Activated CD4-positive, alpha-beta T cell treated with anti-CD3 and anti-CD28 coated beads for 36 hours (primary cell): ENCODE measurements at regions of chr6 and their contacts with region 1.

Region 1: GRCh38 chr6:42453031-42453653 is 1.4 kb upstream of the TRERF1 start:
- DNase-seq: peak; percentile 87
- ATAC-seq: peak; percentile 76
- H3K4me3 Mint-ChIP-seq: peak overlapping the region; percentile 83
- H3K27ac Mint-ChIP-seq: no peak overlapping the region
- H3K4me1 Mint-ChIP-seq: peaks cover 34% of the 10 kb centered on the region
- H3K27me3 Mint-ChIP-seq: peaks cover 5% of the 10 kb centered on the region

Region 2: GRCh38 chr6:42315991-42316378 is 137.2 kb before region 1 on chr6:
- CTCF ChIA-PET with region 1: no interaction called
- POLR2A ChIA-PET with region 1: no interaction called
- intact Hi-C with region 1: loop called in 1 of 2 experiments (anchors 5 kb)
- DNase-seq: peak; percentile 54
- ATAC-seq: peak; percentile 61
- H3K4me3 Mint-ChIP-seq: no peak overlapping the region
- H3K27ac Mint-ChIP-seq: peak overlapping the region; percentile 69
- H3K4me1 Mint-ChIP-seq: peaks cover 61% of the 10 kb centered on the region
- H3K27me3 Mint-ChIP-seq: no peaks in the 10 kb centered on the region

Region 3: DNA sequence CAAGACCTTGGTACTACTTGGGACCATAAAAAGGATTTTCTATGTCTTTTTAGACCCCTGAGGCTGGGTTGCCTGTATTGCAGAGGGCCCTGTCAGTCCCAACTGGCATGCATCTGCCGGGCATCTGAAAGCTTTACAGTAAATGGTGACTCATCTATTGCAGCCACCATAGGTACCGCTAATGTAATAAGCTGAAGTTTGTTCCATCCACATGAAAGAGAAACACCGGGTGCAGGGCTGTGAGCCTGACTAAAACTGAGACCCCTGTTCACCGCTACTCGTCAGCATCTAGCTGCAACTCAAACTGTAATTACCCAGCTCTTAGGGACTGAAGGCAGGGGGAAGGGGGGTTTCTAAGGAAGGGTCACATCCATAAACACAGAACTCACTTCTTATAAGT is 51.0 kb before region 1 on chr6:
- CTCF ChIA-PET with region 1: interaction called, 5 read pairs
- POLR2A ChIA-PET with region 1: no interaction called
- intact Hi-C with region 1: loop called in 1 of 2 experiments (anchors 2 kb)
- DNase-seq: peak; percentile 78
- ATAC-seq: peak; percentile 85
- H3K4me3 Mint-ChIP-seq: peak overlapping the region; percentile 18
- H3K27ac Mint-ChIP-seq: peak overlapping the region; percentile 69
- H3K4me1 Mint-ChIP-seq: peaks cover 83% of the 10 kb centered on the region
- H3K27me3 Mint-ChIP-seq: no peaks in the 10 kb centered on the region

Region 4: GRCh38 chr6:42423244-42423643 is 29.9 kb before region 1 on chr6:
- CTCF ChIA-PET with region 1: interaction called, 3 read pairs
- POLR2A ChIA-PET with region 1: no interaction called
- intact Hi-C with region 1: loop called (anchors 2 kb)
- DNase-seq: peak; percentile 69
- ATAC-seq: peak; percentile 75
- H3K4me3 Mint-ChIP-seq: peak overlapping the region; percentile 1
- H3K27ac Mint-ChIP-seq: peak overlapping the region; percentile 20
- H3K4me1 Mint-ChIP-seq: peaks cover 63% of the 10 kb centered on the region
- H3K27me3 Mint-ChIP-seq: no peaks in the 10 kb centered on the region

Region 5: DNA sequence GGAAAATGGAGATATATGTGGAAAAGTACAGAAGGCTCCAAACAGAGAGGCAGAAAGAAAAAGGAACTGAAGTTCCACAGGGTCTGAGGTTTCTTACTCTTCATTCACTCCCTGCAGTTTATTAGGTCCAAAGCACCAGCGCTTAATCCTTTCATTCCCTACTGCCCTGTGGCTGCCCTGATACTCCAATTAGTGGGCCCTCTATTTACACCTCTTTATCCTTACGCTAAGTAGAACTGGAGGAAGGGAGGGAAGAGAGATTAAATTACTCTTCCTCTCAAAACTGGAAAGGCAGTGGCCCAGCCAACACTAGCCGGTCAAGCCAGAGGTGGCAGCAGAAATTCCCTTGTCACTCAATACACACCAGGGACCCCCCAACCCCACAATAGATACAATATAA is 21.8 kb before region 1 on chr6:
- CTCF ChIA-PET with region 1: no interaction called
- POLR2A ChIA-PET with region 1: interaction called, 10 read pairs
- intact Hi-C with region 1: no loop called
- DNase-seq: no peak
- ATAC-seq: no peak
- H3K4me3 Mint-ChIP-seq: no peak overlapping the region
- H3K27ac Mint-ChIP-seq: no peak overlapping the region
- H3K4me1 Mint-ChIP-seq: peaks cover 43% of the 10 kb centered on the region
- H3K27me3 Mint-ChIP-seq: no peaks in the 10 kb centered on the region

Region 6: GRCh38 chr6:42520786-42521607 is 67.9 kb after region 1 on chr6:
- CTCF ChIA-PET with region 1: no interaction called
- POLR2A ChIA-PET with region 1: no interaction called
- intact Hi-C with region 1: loop called in 1 of 2 experiments (anchors 2 kb)
- DNase-seq: peak; percentile 49
- ATAC-seq: peak; percentile 97
- H3K4me3 Mint-ChIP-seq: no peak overlapping the region
- H3K27ac Mint-ChIP-seq: peak overlapping the region; percentile 76
- H3K4me1 Mint-ChIP-seq: peaks cover 24% of the 10 kb centered on the region
- H3K27me3 Mint-ChIP-seq: no peaks in the 10 kb centered on the region

Region 7: GRCh38 chr6:42532038-42532669 is 79.0 kb after region 1 on chr6:
- CTCF ChIA-PET with region 1: interaction called, 5 read pairs
- POLR2A ChIA-PET with region 1: interaction called, 3 read pairs
- intact Hi-C with region 1: loop called in 1 of 2 experiments (anchors 5 kb)
- DNase-seq: peak; percentile 31
- ATAC-seq: peak; percentile 65
- H3K4me3 Mint-ChIP-seq: no peak overlapping the region
- H3K27ac Mint-ChIP-seq: no peak overlapping the region
- H3K4me1 Mint-ChIP-seq: no peaks in the 10 kb centered on the region
- H3K27me3 Mint-ChIP-seq: peaks cover 2% of the 10 kb centered on the region